Activated CD4-positive, alpha-beta memory T cell treated with anti-CD3 and anti-CD28 coated beads for 36 hours (primary cell): ENCODE measurements at regions of chr3 and their contacts with region 1.

Region 1: GRCh38 chr3:72629191-72629631 is 219.0 kb downstream of the SHQ1 start:
- DNase-seq: no peak
- H3K4me3 Mint-ChIP-seq: peak overlapping the region; percentile 4
- H3K27ac Mint-ChIP-seq: peak overlapping the region; percentile 74
- H3K4me1 Mint-ChIP-seq: peaks cover 60% of the 10 kb centered on the region
- H3K27me3 Mint-ChIP-seq: no peaks in the 10 kb centered on the region

Region 2: GRCh38 chr3:71978150-71978721 is 651.0 kb before region 1 on chr3:
- CTCF ChIA-PET with region 1: no interaction called
- POLR2A ChIA-PET with region 1: no interaction called
- intact Hi-C with region 1: loop called (anchors 5 kb)
- DNase-seq: peak; percentile 67
- H3K4me3 Mint-ChIP-seq: peak overlapping the region; percentile 38
- H3K27ac Mint-ChIP-seq: peak overlapping the region; percentile 88
- H3K4me1 Mint-ChIP-seq: peaks cover 44% of the 10 kb centered on the region
- H3K27me3 Mint-ChIP-seq: peaks cover 19% of the 10 kb centered on the region

Region 3: DNA sequence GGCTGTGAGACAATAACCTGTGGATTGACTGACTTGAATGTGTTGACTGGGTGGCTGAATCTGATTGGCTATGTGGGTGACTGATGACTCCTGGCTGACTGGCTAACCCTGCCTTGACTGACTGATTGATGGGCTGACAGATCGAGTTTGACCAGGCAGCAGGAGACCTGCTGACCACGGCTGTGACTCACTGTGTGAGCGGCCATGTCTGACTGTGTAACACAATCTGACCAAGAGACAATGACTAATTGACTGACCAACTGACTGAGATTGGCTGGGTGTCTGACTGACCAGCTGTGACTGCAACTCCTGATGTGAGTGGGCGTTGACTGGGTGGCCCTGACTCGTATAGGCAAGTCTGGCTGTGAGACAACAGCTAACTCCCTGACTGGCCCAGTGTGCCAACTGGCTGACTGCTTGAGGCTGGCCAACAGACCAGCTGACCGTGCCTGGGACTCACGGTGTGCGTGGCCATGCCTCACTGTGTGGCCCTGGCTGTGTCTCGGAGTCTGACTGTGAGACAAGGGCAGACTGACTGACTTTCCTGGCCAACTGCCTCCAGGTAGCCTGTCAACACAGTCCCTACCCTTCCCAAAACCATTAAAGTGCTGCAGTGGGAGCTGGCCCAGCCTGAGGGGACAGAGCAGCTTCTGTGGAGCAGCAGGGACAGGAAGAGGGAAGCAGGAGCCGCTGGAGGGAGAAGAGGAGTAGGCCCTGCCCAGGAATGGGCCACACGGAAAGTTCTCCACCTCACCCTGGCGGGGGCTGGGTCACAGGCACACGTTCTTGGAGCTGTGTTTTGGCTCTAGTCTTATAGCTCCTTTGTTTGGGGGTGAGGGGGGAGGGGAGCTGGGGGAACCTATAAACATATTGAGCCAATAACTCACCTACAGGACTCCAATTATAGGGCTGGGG is 289.8 kb before region 1 on chr3:
- CTCF ChIA-PET with region 1: no interaction called
- POLR2A ChIA-PET with region 1: no interaction called
- intact Hi-C with region 1: loop called (anchors 5 kb)
- DNase-seq: no peak
- H3K4me3 Mint-ChIP-seq: no peak overlapping the region
- H3K27ac Mint-ChIP-seq: no peak overlapping the region
- H3K4me1 Mint-ChIP-seq: peaks cover 27% of the 10 kb centered on the region
- H3K27me3 Mint-ChIP-seq: no peaks in the 10 kb centered on the region

Region 4: GRCh38 chr3:72426618-72427397 is 202.4 kb before region 1 on chr3:
- CTCF ChIA-PET with region 1: no interaction called
- POLR2A ChIA-PET with region 1: no interaction called
- intact Hi-C with region 1: loop called (anchors 5 kb)
- DNase-seq: no peak
- H3K4me3 Mint-ChIP-seq: peak overlapping the region; percentile 23
- H3K27ac Mint-ChIP-seq: peak overlapping the region; percentile 82
- H3K4me1 Mint-ChIP-seq: peaks cover 78% of the 10 kb centered on the region
- H3K27me3 Mint-ChIP-seq: no peaks in the 10 kb centered on the region

Region 5: GRCh38 chr3:72482589-72483321 is 146.5 kb before region 1 on chr3:
- CTCF ChIA-PET with region 1: no interaction called
- POLR2A ChIA-PET with region 1: interaction called, 3 read pairs
- intact Hi-C with region 1: loop called (anchors 1 kb)
- DNase-seq: peak; percentile 95
- H3K4me3 Mint-ChIP-seq: peak overlapping the region; percentile 42
- H3K27ac Mint-ChIP-seq: peak overlapping the region; percentile 91
- H3K4me1 Mint-ChIP-seq: peaks cover 79% of the 10 kb centered on the region
- H3K27me3 Mint-ChIP-seq: no peaks in the 10 kb centered on the region

Region 6: DNA sequence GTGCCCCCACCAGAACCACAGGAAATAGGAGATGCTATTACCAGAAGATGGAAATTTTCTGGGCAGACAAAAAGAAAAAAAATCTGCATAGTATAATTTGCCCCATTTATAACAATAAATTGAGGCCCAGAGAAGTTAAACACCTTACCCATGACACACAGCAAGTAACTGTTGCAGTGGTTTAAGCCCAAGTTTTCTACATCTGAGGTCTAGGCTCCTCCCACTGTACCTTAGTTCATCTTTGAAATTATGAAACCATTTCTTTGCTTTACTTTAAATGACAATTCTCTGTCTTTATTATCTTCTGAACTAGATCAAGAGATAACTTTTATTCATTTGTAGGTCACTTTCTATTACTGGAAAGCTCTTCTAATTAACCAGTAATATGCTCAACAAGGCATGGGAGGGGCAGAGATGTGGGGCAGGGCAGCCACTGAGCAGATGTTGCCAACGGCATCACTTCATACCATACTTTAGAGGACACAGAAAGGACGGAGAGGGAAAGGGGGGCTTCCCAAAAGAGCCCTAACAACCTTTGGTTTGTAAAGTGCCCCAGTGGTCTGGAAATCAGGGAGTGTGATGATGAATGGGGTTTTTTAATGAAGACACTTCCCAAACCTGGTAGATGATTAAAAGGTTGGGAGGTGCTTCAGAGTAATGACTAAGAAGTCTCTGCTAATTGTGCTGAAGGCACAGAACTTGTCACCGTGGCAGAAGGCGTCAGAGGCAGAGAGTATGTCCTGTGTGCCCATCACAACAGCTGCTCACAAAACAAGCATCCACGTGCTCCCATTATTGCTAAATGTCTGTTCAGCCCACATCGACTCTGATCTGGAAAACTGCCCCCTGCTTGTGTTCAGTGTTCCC is 123.4 kb before region 1 on chr3:
- CTCF ChIA-PET with region 1: no interaction called
- POLR2A ChIA-PET with region 1: no interaction called
- intact Hi-C with region 1: no loop called
- DNase-seq: peak; percentile 40
- H3K4me3 Mint-ChIP-seq: no peak overlapping the region
- H3K27ac Mint-ChIP-seq: peak overlapping the region; percentile 7
- H3K4me1 Mint-ChIP-seq: peaks cover 19% of the 10 kb centered on the region
- H3K27me3 Mint-ChIP-seq: no peaks in the 10 kb centered on the region